ENCODE measurements at regions of chr7 and their contacts with region 1.

Region 1: GRCh38 chr7:8149222-8149621 is 112.7 kb downstream of the ICA1 start:
- DNase-seq: no peak
- CTCF ChIP-seq: no peak

Region 2: DNA sequence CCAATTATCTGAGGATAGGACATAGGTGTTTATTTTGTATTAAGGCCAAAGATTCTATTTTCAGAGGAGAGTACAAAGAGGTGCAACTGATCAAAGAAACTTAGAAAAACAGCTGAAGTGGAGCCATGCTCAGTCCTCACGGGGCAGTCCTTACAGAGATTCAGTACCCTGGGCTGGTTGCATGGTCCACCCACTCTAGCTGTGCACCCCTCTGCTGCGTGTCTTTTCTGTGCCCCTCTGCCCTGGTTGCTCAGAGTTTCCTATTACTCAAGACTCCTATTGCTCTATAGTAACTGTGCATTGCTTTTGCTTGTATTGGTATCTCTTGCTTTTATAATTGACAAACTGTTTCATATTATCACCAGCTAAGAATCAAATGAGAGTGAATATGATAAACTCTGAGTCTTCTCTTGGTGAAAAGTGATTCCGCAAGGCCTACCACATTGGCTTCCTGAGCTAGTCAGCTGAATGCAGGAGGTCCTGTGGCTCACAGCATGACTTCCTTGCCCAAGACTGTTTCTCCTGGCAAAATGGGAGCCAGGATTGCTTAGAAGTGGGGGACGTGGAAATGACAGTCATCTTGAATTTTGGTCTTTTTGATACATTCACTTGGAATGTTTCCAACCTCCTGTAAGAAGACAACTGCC is 43.6 kb before region 1 on chr7:
- CTCF ChIA-PET with region 1: no interaction called
- POLR2A ChIA-PET with region 1: no interaction called
- DNase-seq: no peak
- CTCF ChIP-seq: no peak

Region 3: DNA sequence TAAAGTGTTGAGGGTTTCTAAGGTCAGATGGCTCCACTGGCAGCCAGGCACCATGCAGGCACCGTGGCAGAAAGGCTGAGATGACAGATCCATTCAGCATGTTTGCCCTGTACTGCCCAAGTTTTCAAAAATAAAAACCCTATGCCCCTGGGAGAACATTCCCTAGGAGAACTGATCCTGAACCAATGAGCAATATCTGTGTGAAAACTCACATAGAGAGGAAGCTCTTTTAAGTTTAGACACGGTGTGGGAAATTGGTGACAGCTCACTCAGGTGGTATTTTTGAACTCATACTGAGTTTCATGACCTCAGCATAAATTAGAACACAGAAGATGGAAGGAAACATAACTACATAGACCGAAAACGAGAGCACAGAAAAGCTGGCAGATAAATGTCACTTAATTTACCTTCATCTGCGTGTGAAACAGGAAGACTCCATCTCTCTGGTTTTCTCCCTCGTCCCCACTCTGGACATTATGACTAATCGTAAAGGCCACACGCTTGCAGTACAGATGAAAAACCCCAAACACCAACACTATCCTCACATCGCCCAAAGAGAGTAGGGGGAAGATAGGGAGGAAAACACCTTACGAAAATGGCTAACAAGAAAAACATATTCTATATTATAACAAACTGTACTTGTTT is 15.0 kb before region 1 on chr7:
- CTCF ChIA-PET with region 1: interaction called, 16 read pairs
- POLR2A ChIA-PET with region 1: no interaction called
- DNase-seq: peak; percentile 62
- CTCF ChIP-seq: no peak

Measured in GM10248 (cell line).